WTC11 (cell line): ENCODE measurements at regions of chr7 and their contacts with region 1.

Region 1: GRCh38 chr7:141975806-141976523 is 2.4 kb upstream of the TAS2R38 start:
- DNase-seq: peak; percentile 95
- ATAC-seq: peak; percentile 97
- H3K4me3 Mint-ChIP-seq: peak overlapping the region; percentile 64
- H3K27ac Mint-ChIP-seq: peak overlapping the region; percentile 24
- H3K4me1 Mint-ChIP-seq: peaks cover 11% of the 10 kb centered on the region; the same call in 1 of the 2 replicates
- H3K27me3 Mint-ChIP-seq: no peaks in the 10 kb centered on the region
- CTCF ChIP-seq: peak; percentile 86

Region 2: GRCh38 chr7:142012825-142013511 is 37.0 kb after region 1 on chr7:
- CTCF ChIA-PET with region 1: interaction called, 54 read pairs
- POLR2A ChIA-PET with region 1: no interaction called
- DNase-seq: peak; percentile 15
- ATAC-seq: peak; percentile 98
- H3K4me3 Mint-ChIP-seq: no peak overlapping the region
- H3K27ac Mint-ChIP-seq: no peak overlapping the region
- H3K4me1 Mint-ChIP-seq: peaks cover 7% of the 10 kb centered on the region
- H3K27me3 Mint-ChIP-seq: no peaks in the 10 kb centered on the region
- CTCF ChIP-seq: no peak

Region 3: DNA sequence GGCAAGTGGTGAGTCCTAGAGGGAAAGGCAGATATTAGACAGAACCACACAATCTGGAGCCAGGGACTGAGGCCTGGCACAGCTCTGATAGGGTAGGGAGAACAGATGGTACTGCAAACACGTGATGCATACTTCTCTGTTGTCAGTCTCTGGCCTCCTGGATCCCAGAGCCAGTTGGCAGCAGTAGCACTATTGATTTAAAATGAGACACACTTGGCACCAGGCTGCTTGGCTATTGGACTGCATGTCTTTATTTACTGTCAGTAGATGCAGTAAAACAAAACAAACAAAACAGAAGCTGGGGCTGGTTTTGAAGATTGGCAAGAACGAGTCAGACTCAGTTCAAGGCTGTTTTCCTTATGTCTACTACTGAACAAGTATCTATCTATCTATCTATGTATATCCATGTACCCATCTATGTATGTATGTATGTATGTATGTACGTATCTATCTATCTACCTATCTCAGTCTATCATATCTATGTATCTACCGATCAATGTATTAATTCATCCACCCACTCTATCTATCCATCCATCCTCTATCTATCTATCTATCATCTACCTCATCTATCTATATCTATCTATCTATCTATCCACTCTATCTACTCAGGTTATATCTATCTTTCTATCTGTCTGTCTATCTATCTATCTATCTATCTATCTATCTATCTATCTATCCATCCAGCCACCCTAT is 112.2 kb after region 1 on chr7:
- CTCF ChIA-PET with region 1: interaction called, 26 read pairs
- POLR2A ChIA-PET with region 1: no interaction called
- DNase-seq: no peak
- ATAC-seq: no peak
- H3K4me3 Mint-ChIP-seq: no peak overlapping the region
- H3K27ac Mint-ChIP-seq: no peak overlapping the region
- H3K4me1 Mint-ChIP-seq: no peaks in the 10 kb centered on the region
- H3K27me3 Mint-ChIP-seq: no peaks in the 10 kb centered on the region; the same call in 1 of the 2 replicates
- CTCF ChIP-seq: no peak

Region 4: DNA sequence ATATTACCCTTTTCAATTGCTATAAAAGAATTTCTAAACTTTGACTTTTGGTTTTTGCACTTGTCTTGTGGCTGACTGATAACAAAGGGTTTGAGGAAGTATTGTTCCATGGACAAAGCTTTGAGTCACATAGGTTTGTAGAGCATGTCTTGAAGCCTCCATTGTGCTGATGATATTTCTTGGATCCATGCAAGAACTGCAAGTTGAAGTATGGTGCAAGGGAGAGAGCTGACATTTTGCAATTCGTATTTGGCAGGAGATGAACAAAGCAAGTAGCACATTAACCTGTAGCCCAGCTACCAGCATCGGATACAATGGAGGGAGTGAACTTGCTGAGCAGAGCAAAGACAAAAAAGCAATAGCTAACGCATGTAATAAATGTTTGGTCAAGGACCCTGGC is 158.9 kb after region 1 on chr7:
- CTCF ChIA-PET with region 1: interaction called, 17 read pairs
- POLR2A ChIA-PET with region 1: no interaction called
- DNase-seq: no peak
- ATAC-seq: no peak; the same call in 1 of the 2 replicates
- H3K4me3 Mint-ChIP-seq: no peak overlapping the region
- H3K27ac Mint-ChIP-seq: no peak overlapping the region
- H3K4me1 Mint-ChIP-seq: peaks cover 6% of the 10 kb centered on the region
- H3K27me3 Mint-ChIP-seq: no peaks in the 10 kb centered on the region
- CTCF ChIP-seq: no peak

Region 5: GRCh38 chr7:142248166-142249160 is 272.5 kb after region 1 on chr7:
- CTCF ChIA-PET with region 1: interaction called, 19 read pairs
- POLR2A ChIA-PET with region 1: no interaction called
- DNase-seq: peak; percentile 25
- ATAC-seq: peak; percentile 86
- H3K4me3 Mint-ChIP-seq: no peak overlapping the region
- H3K27ac Mint-ChIP-seq: no peak overlapping the region
- H3K4me1 Mint-ChIP-seq: peaks cover 16% of the 10 kb centered on the region
- H3K27me3 Mint-ChIP-seq: no peaks in the 10 kb centered on the region; the same call in 1 of the 2 replicates
- CTCF ChIP-seq: no peak